ENCODE measurements at regions of chr12 and their contacts with region 1.

Region 1: DNA sequence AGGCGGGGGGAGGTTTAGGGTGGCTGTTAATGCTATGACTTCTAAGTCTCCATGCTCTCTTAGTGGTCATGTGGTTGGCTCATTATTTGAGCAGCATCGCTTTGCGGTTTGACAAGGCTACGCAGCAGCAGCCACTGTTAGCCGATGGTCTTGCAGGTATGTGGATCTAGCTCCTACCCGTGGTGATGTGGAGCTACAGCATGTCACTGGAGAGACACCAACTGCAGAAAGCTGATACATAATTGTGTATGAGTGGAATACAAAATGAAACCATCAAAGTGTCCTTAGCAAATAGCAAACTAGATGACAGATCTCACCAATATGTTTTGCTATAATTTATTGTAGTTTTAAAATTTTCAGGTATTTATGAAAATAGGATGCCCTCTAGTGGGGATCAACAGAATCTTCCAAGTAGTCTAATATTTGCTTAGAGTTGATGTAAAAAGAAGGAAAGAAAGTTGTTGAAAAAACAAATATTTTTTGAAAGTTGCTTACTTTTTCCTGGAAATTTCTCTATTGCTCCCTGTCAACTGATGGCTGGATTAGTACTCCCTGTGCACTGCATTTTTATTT is 94.9 kb downstream of the NAV3 start:
- DNase-seq: peak; percentile 94
- H3K4me3 ChIP-seq: no peak overlapping the region
- CTCF ChIP-seq: peak; percentile 94

Region 2: GRCh38 chr12:77724367-77724957 is 201.2 kb before region 1 on chr12:
- CTCF ChIA-PET with region 1: interaction called, 116 read pairs
- POLR2A ChIA-PET with region 1: no interaction called
- DNase-seq: no peak
- H3K4me3 ChIP-seq: no peak overlapping the region
- CTCF ChIP-seq: peak; percentile 61

Region 3: DNA sequence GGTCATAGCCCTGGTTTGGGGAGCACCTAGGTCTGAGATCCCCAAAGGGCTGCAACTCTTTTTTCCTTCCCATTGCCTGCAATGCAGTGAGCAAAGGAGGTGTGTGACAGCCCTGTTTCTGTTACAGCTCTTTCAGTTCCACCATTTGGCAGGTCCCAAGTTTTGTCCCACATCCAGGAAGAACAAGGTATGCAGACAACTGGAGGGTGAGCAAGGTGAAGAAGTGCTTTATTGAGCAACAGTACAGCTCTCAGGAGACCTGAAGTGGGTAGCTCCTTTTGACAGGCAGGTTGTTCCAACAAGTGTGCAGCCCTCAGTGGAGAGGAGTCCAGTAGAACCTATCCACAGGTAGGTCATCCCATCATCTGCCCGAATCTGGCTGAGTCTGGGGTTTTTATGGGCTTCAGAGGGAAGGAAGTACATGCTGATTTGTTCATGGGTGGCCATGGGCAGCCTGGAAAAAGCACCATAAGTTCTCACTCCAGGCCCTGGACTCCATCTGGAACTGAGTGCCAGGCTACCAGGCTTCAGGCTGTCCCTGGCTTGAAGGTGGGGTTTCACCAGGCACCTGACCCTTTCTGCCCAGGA is 157.8 kb before region 1 on chr12:
- CTCF ChIA-PET with region 1: no interaction called
- POLR2A ChIA-PET with region 1: no interaction called
- DNase-seq: no peak
- H3K4me3 ChIP-seq: no peak overlapping the region
- CTCF ChIP-seq: no peak

Region 4: GRCh38 chr12:77907936-77908335 is 17.7 kb before region 1 on chr12:
- CTCF ChIA-PET with region 1: interaction called, 45 read pairs
- POLR2A ChIA-PET with region 1: no interaction called
- DNase-seq: no peak
- H3K4me3 ChIP-seq: no peak overlapping the region
- CTCF ChIP-seq: no peak

Region 5: GRCh38 chr12:77914081-77914488 is 11.5 kb before region 1 on chr12:
- CTCF ChIA-PET with region 1: interaction called, 45 read pairs
- POLR2A ChIA-PET with region 1: no interaction called
- DNase-seq: no peak
- H3K4me3 ChIP-seq: no peak overlapping the region
- CTCF ChIP-seq: no peak

Region 6: GRCh38 chr12:77940011-77940423 is 14.4 kb after region 1 on chr12:
- CTCF ChIA-PET with region 1: interaction called, 40 read pairs
- POLR2A ChIA-PET with region 1: interaction called, 12 read pairs
- DNase-seq: peak; percentile 63
- H3K4me3 ChIP-seq: peak overlapping the region; percentile 61
- CTCF ChIP-seq: no peak

Region 7: GRCh38 chr12:78120866-78121560 is 195.4 kb after region 1 on chr12:
- CTCF ChIA-PET with region 1: no interaction called
- POLR2A ChIA-PET with region 1: no interaction called
- DNase-seq: no peak
- H3K4me3 ChIP-seq: no peak overlapping the region
- CTCF ChIP-seq: no peak

Measured in AG04449 (cell line).